Heart right ventricle (tissue), 16 donors: ENCODE measurements at regions of chr11 and their contacts with region 1.

Region 1: DNA sequence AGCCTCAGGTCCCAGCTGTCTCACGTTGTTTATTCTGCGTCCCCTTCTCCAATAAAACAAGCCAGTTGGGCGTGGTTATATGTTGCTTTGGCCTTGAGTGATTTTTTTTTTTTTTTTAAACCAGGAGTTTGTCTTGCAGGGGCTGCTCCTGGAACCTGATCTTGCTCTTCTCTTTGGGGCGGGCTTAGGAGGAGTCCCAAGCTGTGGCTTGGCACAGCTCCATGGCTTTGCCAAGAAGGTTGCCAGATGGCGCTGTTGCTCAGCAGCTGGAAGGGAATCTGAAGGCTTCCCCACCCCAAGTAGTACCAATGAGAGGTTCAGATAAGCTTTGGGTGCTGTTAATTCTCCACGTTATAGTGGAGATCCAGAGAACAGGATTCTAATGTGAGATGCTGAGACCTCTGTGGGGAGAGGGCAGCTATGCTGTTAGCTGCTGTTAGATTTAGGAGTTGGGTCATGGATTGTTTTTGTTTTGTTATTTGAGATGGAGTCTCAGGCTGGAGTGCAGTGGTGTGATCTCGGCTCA is 2.0 kb upstream of the FERMT3 start:
- DNase-seq: peak; percentile 82 to 85
- ATAC-seq: peak; percentile 46 to 75 (median 64)
- H3K4me3 ChIP-seq: no peak overlapping the region
- H3K27ac ChIP-seq: peak overlapping the region in 7 of 10 donors; percentile 1 to 99 (median 28)
- H3K4me1 ChIP-seq: peaks cover 7 to 55% (median 39%) of the 10 kb centered on the region in 9 donors
- H3K27me3 ChIP-seq: no peaks in the 10 kb centered on the region
- CTCF ChIP-seq: peak; percentile 39 to 83 (median 73)

Region 2: DNA sequence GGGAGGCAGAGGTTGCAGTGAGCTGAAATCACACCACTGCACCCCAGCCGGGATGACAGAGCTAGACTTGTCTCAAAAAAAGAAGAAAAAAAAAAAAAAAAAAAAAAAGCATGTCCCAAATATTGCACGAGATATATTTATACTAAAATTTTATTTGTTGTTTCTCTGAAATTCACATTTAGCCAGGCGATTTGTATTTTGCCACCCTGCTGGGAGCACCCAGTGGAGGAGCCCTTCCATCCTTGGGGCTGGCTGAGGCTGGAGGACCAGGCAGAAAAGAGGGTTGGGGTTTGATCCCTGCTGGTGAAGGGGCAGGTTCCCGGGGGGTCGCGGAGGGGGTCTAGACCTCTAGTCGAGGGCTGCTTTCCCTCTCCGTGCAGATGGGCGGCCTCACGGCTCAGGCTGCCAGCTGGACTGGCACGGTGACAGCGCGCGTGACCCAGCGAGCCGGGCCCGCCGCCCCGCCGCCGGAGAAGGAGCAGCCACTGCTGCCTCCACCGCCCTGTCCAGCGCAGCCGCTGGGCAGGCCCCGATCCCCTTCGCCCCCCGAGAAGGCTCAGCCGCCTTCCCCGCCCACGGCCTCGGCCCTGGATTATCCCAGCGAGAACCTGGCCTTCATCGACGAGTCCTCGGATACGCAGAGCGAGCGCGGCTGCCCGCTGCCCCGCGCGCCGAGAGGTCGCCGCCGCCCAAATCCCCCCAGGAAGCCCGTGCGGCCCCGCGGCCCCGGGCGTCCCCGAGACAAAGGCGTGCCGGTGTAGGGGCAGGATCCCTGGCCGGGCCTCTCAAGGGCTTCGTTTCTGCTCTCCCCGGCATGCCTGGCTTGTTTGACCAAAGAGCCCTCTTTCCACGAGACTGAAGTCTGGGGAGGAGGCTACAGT is 94.7 kb after region 1 on chr11:
- intact Hi-C with region 1: loop called (anchors 1 to 5 kb)
- DNase-seq: peak; percentile 60 to 74
- ATAC-seq: peak; percentile 21 to 64 (median 51)
- H3K4me3 ChIP-seq: peak overlapping the region in 9 of 10 donors; percentile 27 to 51 (median 48)
- H3K27ac ChIP-seq: peak overlapping the region in 4 of 10 donors; percentile 4 to 58 (median 31)
- H3K4me1 ChIP-seq: peaks cover 14 to 40% (median 33%) of the 10 kb centered on the region in 9 donors
- H3K27me3 ChIP-seq: peaks cover 6 to 78% (median 73%) of the 10 kb centered on the region in 7 donors
- CTCF ChIP-seq: peak in 1 of 9 donors; percentile 14